ENCODE measurements at regions of chr19 and their contacts with region 1.

Region 1: DNA sequence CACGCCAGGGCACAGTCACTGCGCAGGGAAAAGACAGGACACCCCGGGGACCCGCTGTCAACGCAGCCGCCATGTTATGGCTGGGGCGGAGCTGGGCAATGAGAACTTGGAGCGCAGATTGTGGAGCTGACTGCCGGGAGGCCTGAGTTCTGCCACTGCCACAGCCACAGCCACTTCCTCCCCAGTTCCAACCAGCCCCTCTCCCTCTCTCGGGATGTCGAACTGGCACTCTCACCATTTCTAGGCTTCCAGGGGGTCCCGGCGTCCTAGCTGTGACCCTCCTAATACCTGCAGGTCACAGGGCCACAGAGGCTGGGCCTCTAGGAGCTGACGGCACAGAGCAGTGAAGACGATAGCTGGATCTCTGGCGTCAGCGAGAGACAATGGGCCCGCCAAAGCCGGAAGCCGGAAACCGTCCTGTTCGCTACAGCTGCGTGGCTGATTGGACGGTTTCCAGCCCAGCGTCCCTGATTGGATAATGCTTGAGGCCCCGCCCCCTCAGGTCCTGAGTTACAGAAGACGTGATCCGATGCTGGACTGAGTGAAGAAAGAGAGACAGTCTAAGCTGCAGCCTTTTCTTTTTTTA is at the start of gene ZNF506:
- DNase-seq: peak; percentile 99
- H3K4me3 Mint-ChIP-seq: peak within 1 kb of the TSS; percentile 100
- H3K27ac Mint-ChIP-seq: peak within 1 kb of the TSS; percentile 100
- H3K4me1 Mint-ChIP-seq: peaks cover 44% of the 10 kb centered on the region
- H3K27me3 Mint-ChIP-seq: no peaks in the 10 kb centered on the region
- total RNA-seq, gene ZNF506: 32.6 to 34.0 TPM

Region 2: GRCh38 chr19:19515764-19516519 is 305.5 kb before region 1 on chr19 and contains the start of gene NDUFA13:
- CTCF ChIA-PET with region 1: no interaction called
- intact Hi-C with region 1: loop called (anchors 1 kb)
- DNase-seq: peak; percentile 96
- H3K4me3 Mint-ChIP-seq: peak within 1 kb of the TSS; percentile 86
- H3K27ac Mint-ChIP-seq: peak within 1 kb of the TSS; percentile 96
- H3K4me1 Mint-ChIP-seq: peaks cover 36% of the 10 kb centered on the region
- H3K27me3 Mint-ChIP-seq: no peaks in the 10 kb centered on the region
- total RNA-seq, gene NDUFA13: 351 to 376 TPM

Region 3: DNA sequence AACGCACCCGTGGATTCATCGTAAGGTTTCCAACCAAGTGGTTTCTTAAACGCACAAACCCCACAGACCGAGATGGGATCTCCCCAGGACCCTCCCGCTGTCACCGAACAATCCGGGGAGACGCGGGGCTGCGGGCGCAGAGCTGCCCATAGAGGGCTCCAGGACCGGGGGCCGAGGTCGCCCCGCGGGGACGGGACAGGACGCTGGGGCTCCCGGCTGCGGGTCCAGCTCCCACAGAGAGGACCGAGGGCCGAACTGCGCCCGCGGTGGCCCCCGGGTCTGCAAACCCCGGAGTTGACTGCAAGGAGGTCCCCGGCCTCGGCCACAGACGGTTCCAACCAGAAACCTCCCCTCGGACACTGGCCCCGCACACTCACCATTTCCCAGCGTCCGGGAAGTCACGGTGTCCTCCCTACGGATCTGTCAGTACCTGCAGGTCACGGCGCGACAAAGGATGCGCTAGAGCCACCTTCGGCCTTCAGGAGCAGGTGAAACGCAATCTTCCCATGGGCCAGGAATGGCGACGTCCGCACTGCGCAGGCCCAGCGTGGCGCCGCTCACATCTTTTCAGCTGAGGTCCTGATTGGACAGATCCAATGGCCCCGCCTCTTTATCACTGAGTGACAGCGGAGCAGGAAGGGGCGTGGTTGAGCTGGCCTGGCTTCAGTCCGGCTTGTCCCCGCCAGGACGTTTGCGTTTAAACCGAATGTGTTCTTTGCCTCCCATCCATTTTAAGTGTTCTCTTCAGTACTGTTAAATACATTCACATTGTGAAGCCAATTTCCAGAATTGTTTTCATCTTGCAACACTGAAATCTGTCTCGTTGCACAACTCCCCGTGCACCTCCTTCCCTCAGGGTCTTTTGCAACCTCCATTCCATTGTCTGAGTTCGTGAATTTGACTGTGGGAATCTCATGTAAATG is 88.6 kb before region 1 on chr19 and contains the start of gene ZNF14:
- CTCF ChIA-PET with region 1: no interaction called
- intact Hi-C with region 1: loop called (anchors 1 kb)
- DNase-seq: peak; percentile 98
- H3K4me3 Mint-ChIP-seq: peak within 1 kb of the TSS; percentile 97
- H3K27ac Mint-ChIP-seq: peak within 1 kb of the TSS; percentile 96
- H3K4me1 Mint-ChIP-seq: peaks cover 20% of the 10 kb centered on the region
- H3K27me3 Mint-ChIP-seq: no peaks in the 10 kb centered on the region
- total RNA-seq, gene ZNF14: 8.4 TPM

Region 4: GRCh38 chr19:19805480-19805879 is 16.0 kb before region 1 on chr19:
- CTCF ChIA-PET with region 1: interaction called, 3 read pairs
- intact Hi-C with region 1: loop called (anchors 1 kb)
- DNase-seq: no peak
- H3K4me3 Mint-ChIP-seq: no peak overlapping the region
- H3K27ac Mint-ChIP-seq: peak overlapping the region; percentile 72
- H3K4me1 Mint-ChIP-seq: peaks cover 26% of the 10 kb centered on the region
- H3K27me3 Mint-ChIP-seq: no peaks in the 10 kb centered on the region

Region 5: GRCh38 chr19:19873381-19873780 is 51.9 kb after region 1 on chr19:
- CTCF ChIA-PET with region 1: no interaction called
- intact Hi-C with region 1: loop called (anchors 1 kb)
- DNase-seq: no peak
- H3K4me3 Mint-ChIP-seq: no peak overlapping the region
- H3K27ac Mint-ChIP-seq: no peak overlapping the region
- H3K4me1 Mint-ChIP-seq: peaks cover 35% of the 10 kb centered on the region
- H3K27me3 Mint-ChIP-seq: no peaks in the 10 kb centered on the region

Region 6: DNA sequence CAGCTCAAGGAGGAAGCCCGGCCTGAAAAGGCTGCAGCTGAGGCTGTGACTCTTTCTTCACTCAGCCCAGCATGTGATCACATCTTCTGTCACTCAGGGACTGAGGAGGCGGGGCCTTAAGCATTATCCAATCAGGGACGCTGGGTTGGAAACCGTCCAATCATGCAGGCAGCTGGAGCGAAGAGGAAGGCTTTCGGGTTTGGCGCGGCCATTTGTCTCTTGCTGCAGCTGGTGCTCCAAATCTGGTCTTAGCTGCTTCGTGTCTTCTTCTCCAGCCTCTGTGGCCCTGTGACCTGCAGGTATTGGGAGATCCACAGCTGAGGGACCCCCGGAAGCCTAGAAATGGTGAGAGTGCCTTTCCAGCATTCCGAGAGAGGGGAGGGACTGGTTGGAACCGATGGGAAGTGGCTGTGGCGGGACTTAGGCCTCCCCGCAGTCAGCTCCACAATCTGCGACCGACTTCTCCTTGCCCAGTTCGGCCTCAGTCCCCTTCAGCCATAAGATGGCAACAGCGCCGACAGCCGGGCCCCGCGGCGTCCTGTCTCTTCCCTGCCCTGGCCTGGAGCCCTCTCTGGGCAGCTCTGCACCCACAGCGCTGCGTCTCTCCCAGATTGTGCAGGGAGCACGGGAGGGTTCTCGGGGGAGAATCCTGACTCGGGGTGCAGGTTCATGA is 256.5 kb after region 1 on chr19 and contains the start of gene ZNF90:
- CTCF ChIA-PET with region 1: no interaction called
- intact Hi-C with region 1: loop called (anchors 1 kb)
- DNase-seq: peak; percentile 98
- H3K4me3 Mint-ChIP-seq: peak within 1 kb of the TSS; percentile 97
- H3K27ac Mint-ChIP-seq: peak within 1 kb of the TSS; percentile 63
- H3K4me1 Mint-ChIP-seq: peaks cover 9% of the 10 kb centered on the region
- H3K27me3 Mint-ChIP-seq: no peaks in the 10 kb centered on the region
- total RNA-seq, gene ZNF90: 15.5 to 17.6 TPM

Measured in activated naive CD4-positive, alpha-beta T cell treated with anti-CD3 and anti-CD28 coated beads for 36 hours (primary cell).